ENCODE measurements at regions of chr15 and their contacts with region 1.

Region 1: GRCh38 chr15:91049378-91050127 is 27.2 kb upstream of the VPS33B start:
- DNase-seq: peak in 8 of 9 experiments; percentile 11 to 70 (median 30)
- ATAC-seq: peak; percentile 71
- H3K4me3 ChIP-seq: no peak overlapping the region
- H3K4me3 Mint-ChIP-seq: no peak overlapping the region
- H3K27ac ChIP-seq: no peak overlapping the region
- H3K27ac Mint-ChIP-seq: no peak overlapping the region
- H3K4me1 ChIP-seq: peaks cover 16% of the 10 kb centered on the region
- H3K4me1 Mint-ChIP-seq: peaks cover 21% of the 10 kb centered on the region
- H3K27me3 ChIP-seq: no peaks in the 10 kb centered on the region
- H3K27me3 Mint-ChIP-seq: peaks cover 17% of the 10 kb centered on the region
- CTCF ChIP-seq: peak; percentile 57

Region 2: DNA sequence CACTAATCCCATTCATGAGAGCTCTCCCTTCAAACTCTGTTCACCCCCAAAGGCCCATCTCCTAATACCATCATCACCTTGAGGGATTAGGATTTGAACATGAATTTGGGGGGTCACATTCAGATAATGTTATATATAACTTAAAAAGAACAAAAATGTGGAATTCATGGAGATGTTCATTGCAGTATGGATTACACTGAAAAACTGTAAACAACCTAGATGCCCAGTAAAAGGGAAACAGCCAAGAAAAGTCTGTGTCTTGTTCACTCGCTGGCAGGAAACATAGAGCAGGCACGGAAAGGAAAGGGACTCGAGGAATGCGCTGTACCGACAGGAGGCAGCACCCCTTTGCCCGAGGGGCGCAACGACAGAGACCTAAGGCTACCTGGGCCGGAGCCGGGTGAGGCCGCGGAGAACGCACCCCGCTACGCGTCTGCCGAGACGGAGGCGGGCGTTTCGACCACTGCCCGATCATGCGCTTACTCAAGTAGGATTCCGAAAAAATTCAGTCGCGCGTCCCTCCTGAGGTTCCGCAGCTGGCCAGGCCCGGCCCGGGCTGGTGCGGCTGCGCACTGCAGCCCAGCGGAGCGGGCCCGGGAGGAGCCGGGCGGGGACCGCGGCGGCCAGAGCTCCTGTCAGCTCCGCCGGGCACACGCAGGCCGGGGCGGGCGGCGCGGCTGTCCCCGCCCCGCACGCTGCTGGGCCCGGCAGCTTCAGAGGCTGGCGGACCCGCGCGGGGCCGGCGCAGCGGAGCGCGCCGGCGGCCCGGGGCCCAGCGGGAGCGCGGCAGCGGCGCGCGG is 147.3 kb before region 1 on chr15:
- CTCF ChIA-PET with region 1: no interaction called
- POLR2A ChIA-PET with region 1: no interaction called
- intact Hi-C with region 1: loop called in 1 of 2 experiments (anchors 2 kb)
- DNase-seq: peak; percentile 42 to 88 (median 70)
- ATAC-seq: peak; percentile 69
- H3K4me3 ChIP-seq: peak overlapping the region; percentile 65 to 89
- H3K4me3 Mint-ChIP-seq: peak overlapping the region; percentile 92
- H3K27ac ChIP-seq: peak overlapping the region; percentile 65 to 73
- H3K27ac Mint-ChIP-seq: peak overlapping the region; percentile 93
- H3K4me1 ChIP-seq: peaks cover 15% of the 10 kb centered on the region
- H3K4me1 Mint-ChIP-seq: peaks cover 28% of the 10 kb centered on the region
- H3K27me3 ChIP-seq: no peaks in the 10 kb centered on the region
- H3K27me3 Mint-ChIP-seq: no peaks in the 10 kb centered on the region
- CTCF ChIP-seq: peak; percentile 84

Region 3: DNA sequence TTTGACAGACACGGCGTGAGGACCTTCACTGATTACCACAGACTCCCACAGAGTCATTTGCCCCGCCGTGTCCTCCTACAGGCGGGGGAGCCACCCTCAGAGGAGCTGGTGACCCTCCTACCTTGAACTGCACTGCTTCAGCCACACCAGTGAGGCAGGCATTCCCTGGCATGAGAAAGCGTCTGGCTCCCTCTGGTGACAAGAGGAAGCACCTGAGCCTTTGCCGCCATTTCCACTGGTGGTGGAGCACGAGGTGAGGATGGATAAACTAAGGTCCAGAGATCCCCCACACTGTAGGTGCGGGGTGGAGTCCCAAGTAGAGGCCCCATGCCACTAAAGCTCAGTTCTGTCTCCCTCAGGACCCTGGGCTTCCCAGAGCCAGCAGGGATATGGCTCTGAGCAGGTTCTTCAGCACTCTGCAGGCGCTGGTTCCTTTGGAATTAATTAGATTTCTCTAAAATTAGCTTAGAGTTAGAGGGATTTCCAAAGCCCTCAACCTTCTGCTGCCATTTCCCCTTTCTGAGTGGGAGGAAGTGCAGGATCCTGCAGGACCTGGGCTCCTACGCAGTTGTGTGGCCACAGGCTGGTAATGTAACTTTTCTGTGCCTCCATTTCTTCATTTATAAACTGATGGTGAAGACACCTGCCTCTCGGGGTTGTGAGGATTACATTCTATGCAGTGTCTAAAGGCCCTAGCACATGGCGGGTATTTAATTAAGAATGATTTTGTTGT is 1028.0 kb after region 1 on chr15:
- CTCF ChIA-PET with region 1: no interaction called
- POLR2A ChIA-PET with region 1: no interaction called
- intact Hi-C with region 1: loop called in 1 of 2 experiments (anchors 10 kb)
- DNase-seq: peak in 8 of 9 experiments; percentile 35 to 67 (median 52)
- ATAC-seq: no peak
- H3K4me3 ChIP-seq: no peak overlapping the region
- H3K4me3 Mint-ChIP-seq: no peak overlapping the region
- H3K27ac ChIP-seq: no peak overlapping the region
- H3K27ac Mint-ChIP-seq: no peak overlapping the region
- H3K4me1 ChIP-seq: peaks cover 7% of the 10 kb centered on the region
- H3K4me1 Mint-ChIP-seq: peaks cover 23% of the 10 kb centered on the region
- H3K27me3 ChIP-seq: no peaks in the 10 kb centered on the region
- H3K27me3 Mint-ChIP-seq: no peaks in the 10 kb centered on the region
- CTCF ChIP-seq: peak; percentile 51

Measured in CD8-positive, alpha-beta T cell (primary cell).